Breast epithelium (tissue), 4 donors: ENCODE measurements at regions of chr7 and their contacts with region 1.

Region 1: GRCh38 chr7:151570366-151570915 is 50.7 kb upstream of the RHEB start:
- DNase-seq: no peak
- H3K4me3 ChIP-seq: no peak overlapping the region
- H3K27ac ChIP-seq: no peak overlapping the region
- H3K4me1 ChIP-seq: peaks cover 0 to 7% of the 10 kb centered on the region in 2 donors
- H3K27me3 ChIP-seq: no peaks in the 10 kb centered on the region
- CTCF ChIP-seq: peak in 1 of 3 donors; percentile 21
- POLR2A ChIP-seq: no peak

Region 2: DNA sequence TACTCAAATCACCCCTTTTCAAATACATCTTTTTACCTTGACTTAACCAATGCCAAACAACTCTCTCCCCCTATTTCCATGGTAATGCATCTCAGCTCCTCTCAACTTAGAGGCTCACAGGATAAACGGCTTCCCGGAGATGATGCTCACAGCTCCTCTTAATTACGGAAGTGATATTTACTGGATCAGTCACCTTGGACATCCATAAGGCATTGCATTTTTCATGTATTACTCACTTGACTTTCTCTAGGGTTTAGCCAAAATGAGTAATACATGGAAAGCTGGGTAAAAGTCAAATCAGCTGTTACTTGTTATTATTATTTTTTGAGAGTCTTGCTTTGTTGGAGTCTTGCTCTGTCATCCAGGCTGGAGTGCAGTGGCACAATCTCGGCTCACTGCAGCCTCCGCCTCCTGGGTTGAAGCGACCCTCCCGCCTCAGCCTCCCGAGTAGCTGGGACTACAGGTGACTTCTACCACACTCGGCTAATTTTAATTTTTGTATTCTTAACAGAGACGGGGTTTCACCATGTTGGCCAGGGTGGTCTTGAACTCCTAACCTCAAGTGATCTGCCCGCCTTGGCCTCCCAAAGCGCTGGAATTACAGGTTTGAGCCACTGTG is 22.5 kb after region 1 on chr7:
- intact Hi-C with region 1: no loop called
- DNase-seq: no peak
- H3K4me3 ChIP-seq: no peak overlapping the region
- H3K27ac ChIP-seq: no peak overlapping the region
- H3K4me1 ChIP-seq: no peaks in the 10 kb centered on the region
- H3K27me3 ChIP-seq: no peaks in the 10 kb centered on the region
- CTCF ChIP-seq: no peak
- POLR2A ChIP-seq: no peak

Region 3: GRCh38 chr7:151727579-151728285 is 157.3 kb after region 1 on chr7:
- intact Hi-C with region 1: loop called (anchors 10 kb)
- DNase-seq: peak; percentile 79
- H3K4me3 ChIP-seq: no peak overlapping the region
- H3K27ac ChIP-seq: peak overlapping the region; percentile 74 to 84
- H3K4me1 ChIP-seq: peaks cover 0 to 8% of the 10 kb centered on the region in 2 donors
- H3K27me3 ChIP-seq: no peaks in the 10 kb centered on the region
- CTCF ChIP-seq: no peak
- POLR2A ChIP-seq: no peak